ENCODE measurements at regions of chr7 and their contacts with region 1.

Region 1: DNA sequence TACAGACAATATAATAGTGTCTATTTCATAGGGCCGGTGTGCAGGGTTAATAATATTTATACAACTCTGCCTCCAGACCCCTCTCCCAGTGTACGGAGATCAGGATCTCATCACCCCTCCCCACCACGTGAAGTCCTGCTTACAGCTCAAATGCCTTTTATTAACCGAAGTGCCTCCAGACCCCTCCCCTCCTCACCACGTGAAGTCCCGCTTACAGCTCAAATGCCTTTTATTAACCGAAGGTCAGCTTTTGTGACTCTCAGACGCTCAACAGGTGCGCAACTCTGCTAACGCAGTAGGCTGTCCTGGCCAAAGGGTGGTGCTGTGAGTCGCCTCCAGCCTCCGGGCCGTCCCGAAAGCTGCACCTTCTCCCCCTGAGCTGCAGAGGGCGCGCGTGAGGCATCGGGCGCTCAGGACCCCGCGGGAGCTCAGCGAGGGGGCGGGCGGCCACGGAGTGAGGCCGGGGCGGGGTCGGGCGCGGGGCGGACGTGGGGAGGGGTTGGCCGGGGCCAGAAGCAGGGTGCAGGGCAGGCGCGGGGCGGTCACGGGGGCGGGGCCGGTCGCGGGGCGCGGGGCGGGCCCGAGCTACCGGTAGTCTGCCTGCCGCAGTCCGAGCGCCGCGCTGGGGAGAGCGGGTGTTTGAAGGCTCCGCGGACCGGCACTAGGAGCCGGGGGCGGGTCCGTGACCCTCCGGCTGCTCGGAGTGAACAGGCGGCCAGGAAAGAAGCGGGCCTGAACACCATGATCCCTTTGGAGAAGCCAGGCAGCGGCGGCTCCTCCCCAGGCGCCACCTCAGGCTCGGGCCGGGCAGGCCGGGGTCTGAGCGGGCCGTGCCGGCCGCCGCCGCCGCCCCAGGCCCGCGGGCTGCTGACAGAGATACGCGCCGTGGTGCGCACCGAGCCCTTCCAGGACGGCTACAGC is at the start of gene STK17A:
- DNase-seq: peak; percentile 94
- ATAC-seq: peak; percentile 77
- H3K4me3 Mint-ChIP-seq: peak within 1 kb of the TSS; percentile 97
- H3K27ac Mint-ChIP-seq: peak within 1 kb of the TSS; percentile 99
- H3K4me1 Mint-ChIP-seq: peaks cover 31% of the 10 kb centered on the region
- H3K27me3 Mint-ChIP-seq: peaks cover 18% of the 10 kb centered on the region
- total RNA-seq, gene STK17A: 67.9 to 69.0 TPM

Region 2: GRCh38 chr7:43511029-43511428 is 71.7 kb before region 1 on chr7:
- CTCF ChIA-PET with region 1: interaction called, 11 read pairs
- POLR2A ChIA-PET with region 1: interaction called, 7 read pairs
- DNase-seq: no peak
- ATAC-seq: no peak
- H3K4me3 Mint-ChIP-seq: no peak overlapping the region
- H3K27ac Mint-ChIP-seq: no peak overlapping the region
- H3K4me1 Mint-ChIP-seq: peaks cover 4% of the 10 kb centered on the region
- H3K27me3 Mint-ChIP-seq: peaks cover 23% of the 10 kb centered on the region

Region 3: GRCh38 chr7:43612599-43613589 is 30.1 kb after region 1 on chr7:
- CTCF ChIA-PET with region 1: interaction called, 160 read pairs
- POLR2A ChIA-PET with region 1: interaction called, 7 read pairs
- DNase-seq: no peak
- ATAC-seq: peak; percentile 65
- H3K4me3 Mint-ChIP-seq: no peak overlapping the region
- H3K27ac Mint-ChIP-seq: peak overlapping the region; percentile 74
- H3K4me1 Mint-ChIP-seq: peaks cover 55% of the 10 kb centered on the region
- H3K27me3 Mint-ChIP-seq: no peaks in the 10 kb centered on the region

Region 4: DNA sequence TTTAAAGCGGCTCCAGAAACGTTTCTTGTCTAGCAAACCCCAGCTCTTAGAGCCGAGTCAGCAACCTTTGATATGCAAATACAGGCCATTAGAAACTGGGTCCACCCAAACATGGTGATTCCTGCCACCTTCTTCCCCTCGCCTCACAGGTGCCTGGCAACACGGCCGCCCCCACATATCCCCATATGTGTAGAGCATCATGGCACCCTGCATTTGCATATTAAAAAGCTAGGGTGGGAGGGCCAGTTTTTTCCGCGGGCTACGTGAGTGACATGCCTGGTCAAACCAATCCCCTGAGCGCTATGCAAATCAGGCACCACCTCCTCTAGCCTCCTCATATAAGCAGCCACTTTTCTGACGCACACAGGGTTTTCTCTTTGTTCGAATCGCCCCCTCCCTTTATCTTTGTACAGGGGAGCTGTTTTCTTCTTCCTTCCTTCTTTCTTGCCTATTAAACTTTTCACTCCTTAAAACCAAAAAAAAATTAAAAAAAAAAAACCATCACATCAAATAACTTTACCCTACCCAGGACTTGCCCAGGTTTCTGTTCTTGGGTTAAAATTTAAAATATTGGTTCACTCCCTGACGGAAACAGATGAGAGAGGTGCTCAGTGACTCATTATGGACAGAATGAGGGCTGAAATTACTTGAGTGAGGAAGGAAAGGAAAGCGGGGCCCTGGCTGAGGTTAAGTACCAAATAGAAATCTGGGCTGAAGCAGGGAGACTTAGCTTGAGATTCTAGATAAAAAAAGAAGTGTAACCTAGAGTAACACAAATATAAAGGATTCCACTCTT is 86.7 kb after region 1 on chr7:
- CTCF ChIA-PET with region 1: interaction called, 15 read pairs
- POLR2A ChIA-PET with region 1: interaction called, 16 read pairs
- DNase-seq: peak; percentile 57
- ATAC-seq: peak; percentile 76
- H3K4me3 Mint-ChIP-seq: peak overlapping the region; percentile 30
- H3K27ac Mint-ChIP-seq: peak overlapping the region; percentile 61
- H3K4me1 Mint-ChIP-seq: peaks cover 49% of the 10 kb centered on the region
- H3K27me3 Mint-ChIP-seq: no peaks in the 10 kb centered on the region

Region 5: GRCh38 chr7:43711503-43711902 is 128.7 kb after region 1 on chr7:
- CTCF ChIA-PET with region 1: interaction called, 154 read pairs
- POLR2A ChIA-PET with region 1: no interaction called
- DNase-seq: no peak
- ATAC-seq: no peak
- H3K4me3 Mint-ChIP-seq: no peak overlapping the region
- H3K27ac Mint-ChIP-seq: no peak overlapping the region
- H3K4me1 Mint-ChIP-seq: peaks cover 9% of the 10 kb centered on the region
- H3K27me3 Mint-ChIP-seq: no peaks in the 10 kb centered on the region

Region 6: DNA sequence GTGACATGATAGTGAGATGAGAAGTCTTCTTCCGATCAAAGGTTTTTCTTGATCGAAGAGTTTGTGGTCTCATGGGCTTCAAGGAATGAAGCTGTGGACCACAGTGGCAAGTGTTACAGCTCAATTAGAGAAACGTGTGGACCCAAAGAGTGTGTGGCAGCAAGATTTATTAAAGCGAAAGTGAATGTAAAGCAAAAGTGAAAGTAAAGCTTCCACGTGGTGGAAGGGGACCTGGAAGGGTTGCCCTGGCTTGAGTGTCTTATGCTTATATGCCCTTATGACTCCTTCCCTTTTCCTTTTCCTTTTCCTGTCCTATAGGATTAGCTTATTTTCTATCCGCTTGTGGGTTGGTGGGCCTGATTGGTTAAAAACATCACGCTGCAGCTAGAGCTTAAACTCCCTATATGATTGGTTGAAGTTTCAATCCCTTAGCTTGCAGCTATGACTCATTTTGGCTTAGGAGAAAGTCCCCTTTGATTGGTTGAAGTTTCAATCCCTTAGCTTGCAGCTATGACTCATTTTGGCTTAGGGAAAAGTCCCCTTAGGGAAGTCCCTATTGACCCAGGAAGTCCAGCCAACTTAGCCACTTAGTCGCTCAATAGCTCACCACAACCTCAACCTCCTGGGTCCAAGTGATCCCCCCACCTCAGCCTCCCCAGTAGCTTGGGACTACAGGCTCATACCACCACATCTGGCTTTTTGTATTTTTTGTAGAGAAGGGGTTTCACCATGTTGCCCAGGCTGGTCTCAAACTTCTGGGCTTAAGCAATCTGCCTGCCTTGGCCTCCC is 251.9 kb after region 1 on chr7:
- CTCF ChIA-PET with region 1: interaction called, 67 read pairs
- POLR2A ChIA-PET with region 1: interaction called, 7 read pairs
- DNase-seq: peak; percentile 51
- ATAC-seq: peak; percentile 75
- H3K4me3 Mint-ChIP-seq: peak overlapping the region; percentile 82
- H3K27ac Mint-ChIP-seq: peak overlapping the region; percentile 91
- H3K4me1 Mint-ChIP-seq: peaks cover 22% of the 10 kb centered on the region
- H3K27me3 Mint-ChIP-seq: peaks cover 4% of the 10 kb centered on the region

Measured in activated CD8-positive, alpha-beta T cell treated with anti-CD3 and anti-CD28 coated beads, Interleukin-2, amount 10 ng/mL, durations not matched to agents 7 days and 5 days (primary cell).